Panc1 (cell line): ENCODE measurements at regions of chr12 and their contacts with region 1.

Region 1: DNA sequence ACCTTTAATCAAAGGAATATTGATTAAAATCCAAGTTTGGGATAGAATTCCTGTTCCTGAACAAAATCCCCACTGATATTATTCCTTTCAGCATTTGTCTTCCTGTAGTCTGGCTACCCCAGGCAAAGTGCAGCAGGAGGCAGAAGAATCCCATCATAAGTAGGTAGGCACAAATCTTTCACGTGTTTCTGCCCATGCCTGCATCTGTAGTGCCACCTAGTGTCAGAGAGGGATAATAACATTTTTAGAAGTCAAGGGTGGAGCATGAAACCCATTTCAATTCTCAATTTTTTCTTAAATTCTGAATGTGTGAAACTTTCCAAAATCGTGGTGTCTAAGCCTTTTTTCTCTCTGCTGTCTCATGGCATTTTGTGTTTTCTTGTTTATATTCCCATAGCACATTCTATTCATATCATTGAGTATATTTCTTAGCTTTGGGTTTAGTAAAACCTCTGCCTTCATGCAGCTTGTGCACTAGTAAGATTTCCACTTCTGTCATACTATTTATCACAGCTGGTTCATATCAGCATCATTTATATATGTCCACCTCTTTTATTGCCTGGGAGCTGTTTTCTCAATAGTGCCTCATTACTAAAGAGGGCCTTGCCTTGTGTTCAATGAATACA is 47.8 kb upstream of the RERG start:
- DNase-seq: peak; percentile 22
- ATAC-seq: peak; percentile 79
- H3K4me3 ChIP-seq: no peak overlapping the region
- H3K27ac ChIP-seq: no peak overlapping the region
- H3K4me1 ChIP-seq: no peaks in the 10 kb centered on the region
- H3K27me3 ChIP-seq: no peaks in the 10 kb centered on the region
- CTCF ChIP-seq: peak; percentile 83

Region 2: DNA sequence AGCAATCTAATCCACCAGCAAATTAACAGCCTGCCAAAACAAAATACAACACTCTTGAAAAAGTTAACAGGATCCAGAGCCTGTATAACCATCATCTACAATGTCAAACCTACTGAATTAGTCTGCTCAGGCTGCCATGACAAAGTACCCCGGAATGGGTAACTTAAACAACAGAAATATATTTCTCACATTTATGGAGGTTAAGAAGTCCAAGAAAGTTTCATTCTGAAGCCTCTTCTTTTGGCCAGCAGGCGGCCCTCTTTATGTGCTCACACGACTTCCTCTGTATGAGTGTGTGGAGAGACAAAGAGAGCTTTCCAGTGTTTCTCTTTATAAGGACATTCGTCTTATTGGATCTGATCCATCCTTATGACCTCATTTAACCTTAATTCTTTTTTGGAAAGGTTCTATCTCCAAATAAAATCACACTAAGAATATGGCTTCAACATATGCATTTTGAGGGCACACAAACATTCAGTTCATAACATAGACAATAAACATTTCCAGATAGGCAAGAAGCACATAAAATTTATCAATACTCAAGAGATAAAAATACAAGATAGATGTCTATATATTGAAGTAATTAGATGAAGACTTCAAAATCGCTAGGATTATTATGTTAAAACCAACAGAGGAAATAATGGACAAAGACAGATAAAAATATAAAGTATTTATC is 41.9 kb before region 1 on chr12:
- CTCF ChIA-PET with region 1: no interaction called
- POLR2A ChIA-PET with region 1: no interaction called
- in situ Hi-C with region 1: no loop called
- intact Hi-C with region 1: loop called (anchors 5 kb)
- DNase-seq: no peak
- ATAC-seq: no peak
- H3K4me3 ChIP-seq: no peak overlapping the region
- H3K27ac ChIP-seq: no peak overlapping the region
- H3K4me1 ChIP-seq: no peaks in the 10 kb centered on the region
- H3K27me3 ChIP-seq: no peaks in the 10 kb centered on the region
- CTCF ChIP-seq: peak; percentile 57; the same call in 1 of the 2 replicates